Activated naive CD8-positive, alpha-beta T cell treated with anti-CD3 and anti-CD28 coated beads, Interleukin-2, amount 10 ng/mL, durations not matched to agents 7 days and 5 days (primary cell): ENCODE measurements at regions of chr14 and their contacts with region 1.

Region 1: GRCh38 chr14:39114073-39114838 is at the start of gene GEMIN2:
- DNase-seq: peak; percentile 92
- ATAC-seq: peak; percentile 100
- H3K4me3 Mint-ChIP-seq: peak within 1 kb of the TSS; percentile 96
- H3K27ac Mint-ChIP-seq: peak within 1 kb of the TSS; percentile 95
- H3K4me1 Mint-ChIP-seq: peaks cover 25% of the 10 kb centered on the region
- H3K27me3 Mint-ChIP-seq: no peaks in the 10 kb centered on the region
- total RNA-seq, gene GEMIN2: 23.1 to 24.9 TPM

Region 2: GRCh38 chr14:39097159-39097558 is 17.1 kb before region 1 on chr14:
- POLR2A ChIA-PET with region 1: interaction called, 40 read pairs
- DNase-seq: no peak
- ATAC-seq: peak; percentile 89
- H3K4me3 Mint-ChIP-seq: peak overlapping the region; percentile 59
- H3K27ac Mint-ChIP-seq: peak overlapping the region; percentile 47
- H3K4me1 Mint-ChIP-seq: peaks cover 34% of the 10 kb centered on the region
- H3K27me3 Mint-ChIP-seq: no peaks in the 10 kb centered on the region

Region 3: DNA sequence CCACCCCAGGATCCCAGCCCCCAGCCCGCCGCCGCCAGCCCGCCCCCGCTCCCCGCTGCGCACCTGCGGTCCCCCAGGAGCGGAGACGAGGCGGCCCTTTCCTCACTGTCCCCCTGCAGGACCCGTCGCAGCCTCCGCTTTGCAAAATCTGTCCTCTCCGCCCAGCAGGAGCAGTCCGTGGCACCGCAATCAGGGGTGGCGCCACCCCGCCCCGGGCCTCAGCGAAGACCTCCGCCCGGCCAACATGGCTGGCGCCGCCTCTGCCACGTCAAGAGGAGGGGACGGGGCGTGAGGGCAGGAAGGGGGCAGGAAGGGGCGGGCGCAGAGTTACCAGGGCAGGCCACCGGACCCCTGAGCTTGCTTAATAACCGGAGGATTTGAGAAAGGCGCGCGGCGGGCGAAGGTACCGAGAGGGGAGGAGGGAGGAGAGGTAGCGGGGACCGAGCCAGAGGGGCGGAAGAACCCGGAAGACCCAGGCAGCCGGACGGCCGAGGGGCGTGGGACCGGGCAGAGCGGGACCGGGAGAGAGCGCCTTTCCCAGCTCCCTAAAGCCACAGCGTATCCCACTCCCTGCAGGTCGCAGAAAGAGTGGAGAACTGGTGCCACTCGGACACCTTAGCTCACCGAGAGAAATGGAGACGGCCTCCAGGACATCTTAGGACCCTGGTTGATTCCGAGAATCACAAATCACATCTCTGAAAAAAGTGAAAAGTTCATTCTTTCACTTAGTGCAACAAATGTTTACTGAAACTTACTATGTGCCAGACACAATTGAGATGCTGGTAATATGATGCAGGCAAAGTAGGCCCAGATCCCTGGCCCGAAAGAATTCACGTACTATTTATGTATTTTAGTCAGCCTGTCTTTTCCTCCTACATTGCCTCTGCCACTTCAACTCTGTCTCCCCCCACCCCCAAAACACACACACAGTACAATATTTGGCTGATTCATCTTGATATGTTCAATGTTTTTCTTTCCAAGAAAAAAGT is 11.0 kb before region 1 on chr14 and contains the start of gene SEC23A:
- POLR2A ChIA-PET with region 1: interaction called, 40 read pairs
- DNase-seq: peak; percentile 84
- ATAC-seq: peak; percentile 96
- H3K4me3 Mint-ChIP-seq: peak within 1 kb of the TSS; percentile 99
- H3K27ac Mint-ChIP-seq: peak within 1 kb of the TSS; percentile 98
- H3K4me1 Mint-ChIP-seq: peaks cover 37% of the 10 kb centered on the region
- H3K27me3 Mint-ChIP-seq: no peaks in the 10 kb centered on the region
- total RNA-seq, gene SEC23A: 66.2 to 66.8 TPM